Activated naive CD4-positive, alpha-beta T cell treated with anti-CD3 and anti-CD28 coated beads, Interleukin-2, amount 10 ng/mL, durations not matched to agents 7 days and 5 days (primary cell): ENCODE measurements at regions of chr11 and their contacts with region 1.

Region 1: DNA sequence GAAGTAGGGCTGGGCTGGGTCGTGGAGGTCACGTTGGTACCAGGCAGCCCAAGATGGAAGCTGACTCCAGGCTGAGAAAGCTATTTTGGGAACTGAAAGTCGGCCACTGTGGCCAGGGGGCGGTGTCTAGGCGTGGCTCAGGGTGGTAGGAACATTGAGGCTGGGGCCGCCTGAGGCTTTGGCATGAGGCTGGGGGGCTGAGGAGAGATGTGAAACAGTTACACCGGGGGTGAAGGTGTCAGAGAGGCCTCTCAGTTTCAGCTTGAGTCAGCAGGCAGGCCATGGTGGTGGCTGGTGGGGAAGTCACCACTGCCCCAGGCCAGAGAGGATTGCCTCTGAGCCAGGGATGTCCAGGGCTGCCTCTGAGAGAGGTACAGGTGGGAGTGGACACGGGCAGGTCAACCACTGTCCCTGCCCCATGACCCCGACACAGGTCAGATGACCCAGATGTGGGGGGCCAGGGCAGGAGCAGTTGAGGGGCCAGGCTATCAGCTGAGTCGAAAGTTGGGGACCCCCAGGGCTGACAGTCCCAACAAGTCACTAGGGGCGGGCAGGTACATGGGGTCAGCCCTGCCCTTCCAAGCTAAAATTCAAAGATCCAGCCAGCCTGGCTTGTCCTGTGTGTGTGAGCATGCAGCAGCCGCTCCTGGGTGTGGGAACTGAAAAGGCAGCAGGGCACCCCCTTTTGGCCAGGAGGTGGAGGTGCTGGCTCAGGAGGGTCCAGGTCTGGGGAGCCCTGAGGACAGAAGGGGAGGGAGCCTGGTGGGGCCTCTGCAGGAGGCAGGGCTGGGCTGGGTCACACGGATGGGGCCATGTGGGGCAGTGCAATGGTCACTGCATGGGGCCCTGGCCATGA is 7.2 kb downstream of the KCNK7 start:
- DNase-seq: peak; percentile 86
- H3K4me3 Mint-ChIP-seq: no peak overlapping the region
- H3K27ac Mint-ChIP-seq: peak overlapping the region; percentile 79
- H3K4me1 Mint-ChIP-seq: peaks cover 32% of the 10 kb centered on the region
- H3K27me3 Mint-ChIP-seq: no peaks in the 10 kb centered on the region

Region 2: DNA sequence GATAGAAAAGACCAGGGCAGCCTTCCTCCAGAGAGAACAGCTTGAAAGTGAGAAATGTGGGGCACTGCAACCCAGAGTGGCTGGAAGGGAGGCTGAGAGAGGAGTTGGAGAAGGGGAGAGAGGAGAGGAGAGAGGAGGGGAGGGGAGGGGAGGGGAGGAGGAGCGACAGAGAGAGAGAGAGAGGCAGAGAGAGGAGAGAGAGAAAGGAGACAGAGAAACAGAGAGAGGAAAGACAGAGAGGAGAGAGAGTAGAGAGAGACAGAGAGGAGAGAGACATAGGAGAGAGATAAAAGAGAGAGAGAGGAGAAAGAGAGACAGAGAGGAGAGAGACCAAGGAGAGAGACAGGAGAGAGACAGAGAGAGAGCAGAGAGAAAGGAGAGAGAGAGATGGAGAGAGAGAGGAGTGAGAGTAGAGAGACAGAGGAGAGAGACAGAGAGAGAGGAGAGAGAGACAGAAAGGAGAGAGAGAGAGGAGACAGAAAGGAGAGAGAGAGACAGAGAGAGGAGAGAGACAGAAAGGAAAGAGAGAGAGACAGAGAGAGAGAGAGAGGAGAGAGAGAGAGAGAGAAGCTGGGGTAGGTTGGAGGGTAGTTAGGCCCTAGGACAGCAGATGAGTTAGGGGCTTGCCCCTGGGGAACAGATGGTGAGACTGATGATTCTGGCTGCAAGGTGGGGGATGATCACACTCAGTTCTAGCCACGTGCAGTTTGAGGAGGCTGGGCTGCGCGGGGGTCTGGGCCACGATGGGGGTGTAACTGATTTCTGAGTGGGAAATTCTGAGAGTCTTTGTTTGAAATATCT is 72.1 kb before region 1 on chr11:
- CTCF ChIA-PET with region 1: no interaction called
- DNase-seq: no peak
- H3K4me3 Mint-ChIP-seq: peak overlapping the region; percentile 7
- H3K27ac Mint-ChIP-seq: no peak overlapping the region
- H3K4me1 Mint-ChIP-seq: peaks cover 2% of the 10 kb centered on the region
- H3K27me3 Mint-ChIP-seq: peaks cover 17% of the 10 kb centered on the region

Region 3: GRCh38 chr11:65546217-65546958 is 42.0 kb before region 1 on chr11:
- CTCF ChIA-PET with region 1: interaction called, 48 read pairs
- DNase-seq: peak; percentile 98
- H3K4me3 Mint-ChIP-seq: peak overlapping the region; percentile 71
- H3K27ac Mint-ChIP-seq: peak overlapping the region; percentile 88
- H3K4me1 Mint-ChIP-seq: peaks cover 57% of the 10 kb centered on the region
- H3K27me3 Mint-ChIP-seq: peaks cover 4% of the 10 kb centered on the region

Region 4: DNA sequence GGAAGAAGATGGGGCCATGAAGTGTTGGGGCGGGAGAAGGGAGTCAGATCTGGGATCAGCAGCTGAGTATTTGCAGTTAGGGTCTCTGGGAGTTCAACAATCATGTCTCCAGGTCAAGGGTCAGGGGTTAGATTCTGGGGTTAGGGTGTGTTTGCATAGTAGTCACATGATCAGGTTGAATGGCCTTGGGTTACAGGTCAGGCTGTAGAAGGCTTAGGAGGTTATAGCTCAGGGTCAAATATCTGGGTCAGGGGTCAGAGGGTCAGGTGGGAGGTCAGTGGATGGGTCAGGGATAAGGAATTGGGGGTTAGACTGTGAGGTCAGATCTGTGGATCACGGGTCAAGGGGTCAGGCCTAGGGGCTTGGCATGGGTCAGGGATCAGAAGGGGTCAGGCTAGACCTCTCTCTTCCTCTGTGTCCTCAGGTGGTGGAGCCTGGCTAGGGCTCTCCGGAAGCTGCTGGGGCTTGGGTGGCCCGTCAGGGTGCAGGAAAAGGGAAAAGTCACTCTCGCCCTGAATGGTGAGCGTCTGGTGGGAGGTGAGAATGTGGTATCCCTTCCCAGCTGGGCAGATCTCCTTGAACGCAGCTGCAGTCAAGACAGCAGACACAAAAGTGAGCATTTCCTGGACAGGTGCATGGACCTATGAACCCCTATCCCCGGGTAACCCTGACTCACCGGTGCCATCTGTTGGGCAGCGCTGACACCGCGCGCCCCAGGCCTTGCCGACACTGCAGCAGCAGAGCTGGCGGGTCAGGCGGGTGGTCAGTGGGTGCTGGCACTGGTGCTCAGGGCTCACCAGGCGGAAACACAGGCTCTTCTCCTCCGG is 36.6 kb before region 1 on chr11:
- CTCF ChIA-PET with region 1: interaction called, 11 read pairs
- DNase-seq: peak; percentile 81
- H3K4me3 Mint-ChIP-seq: peak overlapping the region; percentile 8
- H3K27ac Mint-ChIP-seq: peak overlapping the region; percentile 86
- H3K4me1 Mint-ChIP-seq: peaks cover 85% of the 10 kb centered on the region
- H3K27me3 Mint-ChIP-seq: peaks cover 4% of the 10 kb centered on the region

Region 5: GRCh38 chr11:65633390-65634108 is 45.1 kb after region 1 on chr11:
- CTCF ChIA-PET with region 1: no interaction called
- DNase-seq: peak; percentile 48
- H3K4me3 Mint-ChIP-seq: no peak overlapping the region
- H3K27ac Mint-ChIP-seq: peak overlapping the region; percentile 79
- H3K4me1 Mint-ChIP-seq: peaks cover 34% of the 10 kb centered on the region
- H3K27me3 Mint-ChIP-seq: no peaks in the 10 kb centered on the region

Region 6: GRCh38 chr11:65672186-65672860 is 83.9 kb after region 1 on chr11:
- CTCF ChIA-PET with region 1: no interaction called
- DNase-seq: no peak
- H3K4me3 Mint-ChIP-seq: no peak overlapping the region
- H3K27ac Mint-ChIP-seq: no peak overlapping the region
- H3K4me1 Mint-ChIP-seq: no peaks in the 10 kb centered on the region
- H3K27me3 Mint-ChIP-seq: peaks cover 4% of the 10 kb centered on the region

Region 7: GRCh38 chr11:65692367-65692766 is 103.9 kb after region 1 on chr11:
- CTCF ChIA-PET with region 1: no interaction called
- DNase-seq: no peak
- H3K4me3 Mint-ChIP-seq: no peak overlapping the region
- H3K27ac Mint-ChIP-seq: no peak overlapping the region
- H3K4me1 Mint-ChIP-seq: peaks cover 2% of the 10 kb centered on the region
- H3K27me3 Mint-ChIP-seq: peaks cover 26% of the 10 kb centered on the region